IMR-90 (cell line): ENCODE measurements at regions of chr16 and their contacts with region 1.

Region 1: GRCh38 chr16:80045861-80046260 is 445.3 kb upstream of the MAF start:
- DNase-seq: no peak
- ATAC-seq: no peak
- H3K4me3 ChIP-seq: no peak overlapping the region
- H3K27ac ChIP-seq: no peak overlapping the region
- H3K4me1 ChIP-seq: no peaks in the 10 kb centered on the region
- H3K27me3 ChIP-seq: no peaks in the 10 kb centered on the region
- CTCF ChIP-seq: no peak
- POLR2A ChIP-seq: no peak
- RAD21 ChIP-seq: no peak

Region 2: DNA sequence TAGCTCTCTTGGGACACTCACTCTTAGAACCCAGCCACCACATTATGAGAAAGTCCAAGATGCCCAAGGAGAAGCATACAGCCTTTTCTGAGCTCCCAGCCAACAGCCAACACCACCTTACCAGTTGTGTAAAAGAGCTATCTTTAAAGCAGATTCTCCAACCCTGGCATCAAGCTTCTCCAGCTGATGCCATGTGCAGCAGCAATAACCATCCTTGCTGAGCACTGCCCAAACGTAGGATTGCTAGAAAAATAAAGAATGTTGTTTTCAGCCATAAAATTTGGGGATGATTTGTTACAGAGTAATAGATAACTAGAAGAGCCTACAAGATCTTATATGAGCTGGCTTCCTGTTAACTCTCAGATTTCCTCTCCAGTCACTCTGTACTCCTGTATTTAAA is 51.2 kb after region 1 on chr16:
- CTCF ChIA-PET with region 1: no interaction called
- POLR2A ChIA-PET with region 1: no interaction called
- dilution Hi-C with region 1: no loop called
- in situ Hi-C with region 1: no loop called
- intact Hi-C with region 1: loop called (anchors 5 kb)
- DNase-seq: no peak
- ATAC-seq: no peak
- H3K4me3 ChIP-seq: no peak overlapping the region
- H3K27ac ChIP-seq: no peak overlapping the region
- H3K4me1 ChIP-seq: no peaks in the 10 kb centered on the region
- H3K27me3 ChIP-seq: no peaks in the 10 kb centered on the region
- CTCF ChIP-seq: no peak
- POLR2A ChIP-seq: no peak
- RAD21 ChIP-seq: no peak